ENCODE measurements at regions of chr1 and their contacts with region 1.

Region 1: GRCh38 chr1:119347858-119348257 is 20.7 kb upstream of the HAO2 start:
- DNase-seq: peak; percentile 31
- CTCF ChIP-seq: no peak

Region 2: DNA sequence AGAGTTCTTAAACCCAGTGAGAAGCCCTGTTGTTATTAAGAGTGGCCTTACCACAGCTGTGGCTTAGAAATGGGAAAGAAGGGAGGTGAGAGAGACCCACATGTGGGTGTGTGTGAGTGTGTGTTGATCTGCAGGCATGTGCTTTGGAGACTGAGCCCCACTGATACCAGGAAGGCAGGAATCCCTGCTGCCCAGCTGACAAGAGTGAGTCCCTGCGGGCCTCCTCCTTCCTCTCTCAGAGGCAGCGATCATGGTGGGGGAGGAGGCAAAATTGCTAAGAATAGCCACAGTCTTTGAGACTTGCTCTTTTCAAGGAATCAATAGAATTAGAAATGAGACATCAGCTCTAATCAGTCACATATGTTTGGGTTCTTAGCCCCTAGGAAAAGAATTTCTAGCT is 120.4 kb before region 1 on chr1:
- CTCF ChIA-PET with region 1: no interaction called
- POLR2A ChIA-PET with region 1: no interaction called
- DNase-seq: no peak
- CTCF ChIP-seq: no peak

Region 3: DNA sequence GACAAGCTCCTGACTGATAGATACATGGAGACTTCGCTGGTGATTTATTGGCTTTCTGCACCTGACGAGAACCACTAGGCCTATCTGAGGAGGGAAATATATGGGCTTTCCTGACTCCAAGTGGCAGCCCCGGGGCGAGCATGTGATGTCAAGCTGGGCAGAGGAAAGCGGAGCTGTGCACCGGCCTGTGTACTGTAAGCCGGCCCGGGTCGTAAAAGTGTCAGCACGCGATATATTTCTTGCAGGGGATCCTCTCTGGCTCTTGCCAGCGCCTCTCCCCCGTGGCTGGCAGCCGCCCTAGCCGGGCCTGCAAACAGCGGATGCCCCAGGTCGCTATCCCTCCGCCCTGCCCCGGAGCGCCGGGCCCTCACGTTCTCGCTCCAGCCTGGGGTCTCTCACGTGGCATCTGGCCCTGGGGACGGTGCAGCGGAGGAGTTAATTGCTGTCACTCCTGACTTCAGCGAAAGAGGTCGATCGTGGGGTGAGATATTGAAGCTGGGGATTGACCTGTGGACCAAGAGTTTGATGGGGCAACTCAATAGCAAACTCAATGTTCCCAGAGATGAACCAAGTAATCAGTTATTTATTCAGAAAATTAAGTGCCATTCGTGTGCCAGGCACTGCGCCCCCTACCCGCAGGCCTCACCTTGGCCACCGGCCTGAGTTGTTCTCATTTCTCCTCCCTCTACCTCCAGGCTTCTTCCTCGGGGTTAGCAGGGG is 20.3 kb before region 1 on chr1:
- CTCF ChIA-PET with region 1: interaction called, 16 read pairs
- POLR2A ChIA-PET with region 1: no interaction called
- DNase-seq: no peak
- CTCF ChIP-seq: peak; percentile 43

Region 4: GRCh38 chr1:119358636-119359035 is 10.8 kb after region 1 on chr1:
- CTCF ChIA-PET with region 1: interaction called, 14 read pairs
- POLR2A ChIA-PET with region 1: no interaction called
- DNase-seq: no peak
- CTCF ChIP-seq: no peak

Region 5: GRCh38 chr1:119367427-119368124 is 19.7 kb after region 1 on chr1:
- CTCF ChIA-PET with region 1: interaction called, 21 read pairs
- POLR2A ChIA-PET with region 1: no interaction called
- DNase-seq: peak; percentile 52
- CTCF ChIP-seq: peak; percentile 74